B cell (primary cell): ENCODE measurements at regions of chr10 and their contacts with region 1.

Region 1: GRCh38 chr10:14954001-14954770 is at the start of gene DCLRE1C:
- DNase-seq: peak; percentile 91
- ATAC-seq: peak; percentile 77
- H3K4me3 ChIP-seq: peak within 1 kb of the TSS; percentile 74 to 89 (median 77)
- H3K4me3 Mint-ChIP-seq: peak within 1 kb of the TSS; percentile 96
- H3K27ac ChIP-seq: peak within 1 kb of the TSS; percentile 87 to 89
- H3K27ac Mint-ChIP-seq: peak within 1 kb of the TSS; percentile 97
- H3K4me1 ChIP-seq: peaks cover 42 to 62% of the 10 kb centered on the region in 2 donors
- H3K4me1 Mint-ChIP-seq: peaks cover 56% of the 10 kb centered on the region
- H3K27me3 ChIP-seq: no peaks in the 10 kb centered on the region
- H3K27me3 Mint-ChIP-seq: no peaks in the 10 kb centered on the region
- CTCF ChIP-seq: no peak
- total RNA-seq, gene DCLRE1C: 58.8 and 61.8 TPM in 2 replicates

Region 2: GRCh38 chr10:14659626-14660196 is 294.5 kb before region 1 on chr10:
- CTCF ChIA-PET with region 1: no interaction called
- POLR2A ChIA-PET with region 1: no interaction called
- intact Hi-C with region 1: loop called (anchors 5 kb)
- DNase-seq: peak; percentile 81
- ATAC-seq: peak; percentile 75
- H3K4me3 ChIP-seq: peak overlapping the region in 3 of 5 experiments; percentile 2 to 45 (median 3)
- H3K4me3 Mint-ChIP-seq: peak overlapping the region; percentile 66
- H3K27ac ChIP-seq: peak overlapping the region; percentile 72 to 88
- H3K27ac Mint-ChIP-seq: peak overlapping the region; percentile 94
- H3K4me1 ChIP-seq: peaks cover 63 to 71% of the 10 kb centered on the region in 2 donors
- H3K4me1 Mint-ChIP-seq: peaks cover 87% of the 10 kb centered on the region
- H3K27me3 ChIP-seq: no peaks in the 10 kb centered on the region
- H3K27me3 Mint-ChIP-seq: no peaks in the 10 kb centered on the region
- CTCF ChIP-seq: no peak

Region 3: DNA sequence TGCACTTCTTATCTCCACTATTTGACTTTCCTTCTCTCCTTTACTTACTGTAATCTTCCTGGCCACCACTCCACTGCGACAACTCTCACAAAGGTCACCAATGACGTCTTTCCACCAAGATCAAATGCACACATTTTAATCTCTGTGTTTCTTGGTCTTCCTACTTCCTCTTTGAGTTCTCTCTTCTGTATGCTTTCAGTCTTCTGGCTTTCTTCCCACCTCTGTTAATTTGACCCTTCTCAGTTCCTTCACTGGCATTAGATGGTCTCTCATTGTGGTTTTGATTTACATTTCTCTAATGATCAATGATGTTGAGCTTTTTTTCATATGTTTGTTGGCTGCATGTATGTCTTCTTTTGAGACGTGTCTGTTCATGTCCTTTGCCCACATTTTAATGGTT is 211.4 kb before region 1 on chr10:
- CTCF ChIA-PET with region 1: no interaction called
- POLR2A ChIA-PET with region 1: no interaction called
- intact Hi-C with region 1: loop called (anchors 5 kb)
- DNase-seq: peak; percentile 78
- ATAC-seq: peak; percentile 83
- H3K4me3 ChIP-seq: peak overlapping the region in 1 of 5 experiments; percentile 14
- H3K4me3 Mint-ChIP-seq: peak overlapping the region; percentile 74
- H3K27ac ChIP-seq: peak overlapping the region; percentile 93 to 98
- H3K27ac Mint-ChIP-seq: peak overlapping the region; percentile 88
- H3K4me1 ChIP-seq: peaks cover 71 to 76% of the 10 kb centered on the region in 2 donors
- H3K4me1 Mint-ChIP-seq: peaks cover 83% of the 10 kb centered on the region
- H3K27me3 ChIP-seq: no peaks in the 10 kb centered on the region
- H3K27me3 Mint-ChIP-seq: no peaks in the 10 kb centered on the region
- CTCF ChIP-seq: no peak

Region 4: DNA sequence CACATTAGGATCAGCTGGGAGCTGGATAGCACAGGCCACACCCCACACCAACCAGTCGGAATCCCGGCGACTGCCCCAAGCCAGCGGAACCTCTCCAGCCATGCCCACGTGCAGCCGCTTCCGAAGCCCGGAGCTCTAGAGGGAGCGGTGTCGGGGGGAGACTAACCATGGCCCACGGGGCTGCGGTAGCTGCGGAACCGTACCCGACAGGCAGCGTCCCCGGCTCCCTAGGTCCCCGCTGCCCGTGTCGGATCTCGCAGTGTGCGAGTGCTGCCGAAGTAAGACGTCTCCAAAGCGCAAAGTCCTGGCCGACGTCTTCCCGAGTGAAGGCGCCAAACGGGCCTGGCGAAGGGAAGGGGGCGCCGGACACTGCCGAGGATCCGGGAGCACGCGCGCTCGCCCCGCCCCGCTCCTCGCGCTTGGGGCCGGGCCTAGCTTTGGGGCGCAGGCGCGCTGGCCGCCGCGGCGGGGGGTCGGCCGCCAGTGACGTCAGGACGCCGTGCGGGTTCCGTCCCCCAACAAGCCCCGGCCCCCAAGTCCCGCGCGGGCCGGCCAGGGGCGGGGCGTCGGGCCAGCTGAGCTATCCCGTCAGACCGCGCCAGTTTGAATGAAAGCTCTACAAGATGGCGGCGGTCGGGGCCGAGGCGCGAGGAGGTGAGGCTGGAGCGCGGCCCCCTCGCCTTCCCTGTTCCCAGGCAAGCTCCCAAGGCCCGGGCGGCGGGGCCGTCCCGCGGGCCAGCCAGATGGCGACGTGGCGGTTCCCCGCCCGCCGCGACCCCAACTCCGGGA is 75.7 kb before region 1 on chr10 and contains the start of gene SUV39H2:
- CTCF ChIA-PET with region 1: interaction called, 4 read pairs
- POLR2A ChIA-PET with region 1: interaction called, 6 read pairs
- intact Hi-C with region 1: loop called (anchors 1 kb)
- DNase-seq: peak; percentile 96
- ATAC-seq: peak; percentile 92
- H3K4me3 ChIP-seq: peak within 1 kb of the TSS; percentile 53 to 98 (median 94)
- H3K4me3 Mint-ChIP-seq: peak within 1 kb of the TSS; percentile 96
- H3K27ac ChIP-seq: peak within 1 kb of the TSS; percentile 64 to 80
- H3K27ac Mint-ChIP-seq: peak within 1 kb of the TSS; percentile 87
- H3K4me1 ChIP-seq: peaks cover 17 to 23% of the 10 kb centered on the region in 2 donors
- H3K4me1 Mint-ChIP-seq: peaks cover 28% of the 10 kb centered on the region
- H3K27me3 ChIP-seq: peaks cover 0 to 6% (median 0%) of the 10 kb centered on the region in 4 experiments
- H3K27me3 Mint-ChIP-seq: no peaks in the 10 kb centered on the region
- CTCF ChIP-seq: no peak
- total RNA-seq, gene SUV39H2: 3.2 and 3.5 TPM in 2 replicates

Region 5: GRCh38 chr10:14926722-14927416 is 27.3 kb before region 1 on chr10:
- CTCF ChIA-PET with region 1: interaction called, 8 read pairs
- POLR2A ChIA-PET with region 1: interaction called, 8 read pairs
- intact Hi-C with region 1: loop called (anchors 2 kb)
- DNase-seq: peak; percentile 61
- ATAC-seq: peak; percentile 96
- H3K4me3 ChIP-seq: peak overlapping the region in 1 of 5 experiments; percentile 9
- H3K4me3 Mint-ChIP-seq: peak overlapping the region; percentile 20
- H3K27ac ChIP-seq: peak overlapping the region; percentile 51 to 69
- H3K27ac Mint-ChIP-seq: peak overlapping the region; percentile 50
- H3K4me1 ChIP-seq: peaks cover 12 to 20% of the 10 kb centered on the region in 2 donors
- H3K4me1 Mint-ChIP-seq: peaks cover 26% of the 10 kb centered on the region
- H3K27me3 ChIP-seq: no peaks in the 10 kb centered on the region
- H3K27me3 Mint-ChIP-seq: no peaks in the 10 kb centered on the region
- CTCF ChIP-seq: no peak